Adrenal gland (tissue), 19 donors: ENCODE measurements at regions of chr14 and their contacts with region 1.

Region 1: DNA sequence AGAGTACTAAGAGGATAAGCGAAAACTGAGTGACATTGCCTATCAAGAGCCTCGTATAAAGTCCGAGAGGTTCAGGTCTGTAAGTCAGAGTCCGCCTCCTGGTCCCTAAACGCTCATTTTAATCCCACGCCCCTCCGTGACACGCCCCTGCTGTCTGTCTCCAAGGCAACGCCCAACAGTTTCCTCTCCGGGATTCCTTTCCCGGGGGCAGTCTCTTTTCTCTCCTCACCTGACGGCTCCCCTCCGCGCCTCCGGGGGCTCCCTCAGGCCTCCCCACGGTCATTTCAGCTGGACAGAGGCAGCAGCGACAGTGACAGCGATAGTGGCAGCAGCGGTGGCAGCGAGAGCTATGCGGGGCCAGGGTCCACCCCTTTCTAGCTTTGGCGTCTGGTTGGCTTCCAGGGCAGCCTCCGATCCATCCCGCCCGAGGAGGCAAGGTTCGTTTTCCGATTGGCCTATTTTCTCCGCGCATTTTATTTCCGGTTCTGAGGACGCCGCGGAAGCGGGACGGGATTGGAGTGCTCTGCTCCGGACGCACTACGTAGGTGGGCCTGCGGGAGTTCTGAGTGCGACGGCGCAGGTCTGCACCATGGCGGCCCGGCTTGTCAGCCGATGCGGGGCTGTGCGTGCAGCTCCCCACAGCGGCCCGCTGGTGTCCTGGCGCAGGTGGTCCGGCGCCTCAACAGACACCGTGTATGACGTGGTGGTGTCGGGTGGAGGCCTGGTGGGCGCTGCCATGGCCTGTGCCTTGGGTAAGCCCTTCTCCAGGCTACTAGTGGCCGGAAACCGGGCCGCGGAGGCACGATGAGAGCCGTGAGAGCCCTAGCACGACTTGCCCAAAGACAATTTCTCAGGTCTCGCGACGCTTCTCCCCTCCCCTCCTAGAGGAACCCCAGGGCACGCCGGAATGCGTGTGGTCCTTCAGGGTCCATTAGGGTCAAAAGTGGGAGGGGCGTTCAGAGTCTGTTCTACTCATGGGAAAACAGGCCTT is at the starts of genes COQ6 and FAM161B:
- DNase-seq: peak; percentile 94 to 99 (median 97)
- H3K4me3 ChIP-seq: peak within 1 kb of the TSS; percentile 66 to 94 (median 80)
- H3K27ac ChIP-seq: peak within 1 kb of the TSS; percentile 95 to 97 (median 95)
- H3K4me1 ChIP-seq: peaks cover 10 to 31% of the 10 kb centered on the region in 2 donors
- H3K27me3 ChIP-seq: no peaks in the 10 kb centered on the region
- CTCF ChIP-seq: no peak
- POLR2A ChIP-seq: peak; percentile 92 to 98
- total RNA-seq, gene COQ6: 51.1 to 144 (median 69.8) TPM
- total RNA-seq, gene FAM161B: 7.2 to 25.2 (median 12.6) TPM

Region 2: GRCh38 chr14:74038015-74038859 is 88.2 kb after region 1 on chr14:
- intact Hi-C with region 1: loop called in 1 of 2 experiments (anchors 10 kb)
- DNase-seq: no peak
- H3K4me3 ChIP-seq: no peak overlapping the region
- H3K27ac ChIP-seq: no peak overlapping the region
- H3K4me1 ChIP-seq: no peaks in the 10 kb centered on the region
- H3K27me3 ChIP-seq: no peaks in the 10 kb centered on the region
- CTCF ChIP-seq: peak; percentile 50 to 79 (median 59)
- POLR2A ChIP-seq: no peak

Region 3: DNA sequence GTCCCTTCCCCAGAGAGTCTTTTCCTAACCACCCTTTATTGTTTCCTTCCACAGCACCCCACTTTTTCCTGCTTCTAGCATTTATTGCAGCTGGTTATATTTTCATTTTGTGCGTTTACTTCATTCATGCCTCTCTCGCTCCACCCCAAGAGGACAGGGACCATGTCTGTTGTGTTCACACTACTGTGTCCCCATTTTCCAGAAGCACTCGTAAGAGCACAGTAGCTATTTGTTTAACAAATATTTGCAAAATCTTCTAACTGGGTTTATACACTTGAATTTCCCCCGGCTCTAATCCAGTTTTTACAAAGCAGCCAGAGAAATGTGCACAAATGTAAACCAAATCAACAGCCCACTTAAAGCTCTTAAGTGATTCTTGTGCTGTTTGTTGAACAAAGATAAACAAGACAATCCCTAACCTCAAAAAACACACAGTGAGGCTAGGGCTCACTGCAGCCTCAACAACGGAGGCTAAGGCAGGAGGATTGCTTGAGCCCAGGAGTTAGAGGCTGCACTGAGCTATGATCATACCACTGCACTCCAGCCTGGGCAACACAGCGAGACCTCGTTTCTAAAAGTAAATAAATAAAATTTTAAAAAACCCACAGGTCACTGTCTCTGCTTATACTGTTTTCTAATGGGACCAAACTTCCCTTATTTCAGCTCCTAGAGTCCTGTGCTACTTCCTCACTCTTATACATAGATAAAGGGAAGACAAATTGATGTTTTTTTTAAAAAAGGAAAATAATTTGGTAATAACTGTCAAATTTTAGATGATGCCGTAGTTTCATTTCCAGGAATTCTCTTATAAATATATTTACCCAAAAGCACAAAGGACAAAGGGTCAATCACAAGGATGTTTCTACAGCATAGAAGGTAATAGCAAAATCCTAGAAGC is 359.3 kb after region 1 on chr14:
- intact Hi-C with region 1: no loop called
- DNase-seq: no peak
- H3K4me3 ChIP-seq: no peak overlapping the region
- H3K27ac ChIP-seq: no peak overlapping the region
- H3K4me1 ChIP-seq: no peaks in the 10 kb centered on the region
- H3K27me3 ChIP-seq: no peaks in the 10 kb centered on the region
- CTCF ChIP-seq: no peak
- POLR2A ChIP-seq: no peak

Region 4: DNA sequence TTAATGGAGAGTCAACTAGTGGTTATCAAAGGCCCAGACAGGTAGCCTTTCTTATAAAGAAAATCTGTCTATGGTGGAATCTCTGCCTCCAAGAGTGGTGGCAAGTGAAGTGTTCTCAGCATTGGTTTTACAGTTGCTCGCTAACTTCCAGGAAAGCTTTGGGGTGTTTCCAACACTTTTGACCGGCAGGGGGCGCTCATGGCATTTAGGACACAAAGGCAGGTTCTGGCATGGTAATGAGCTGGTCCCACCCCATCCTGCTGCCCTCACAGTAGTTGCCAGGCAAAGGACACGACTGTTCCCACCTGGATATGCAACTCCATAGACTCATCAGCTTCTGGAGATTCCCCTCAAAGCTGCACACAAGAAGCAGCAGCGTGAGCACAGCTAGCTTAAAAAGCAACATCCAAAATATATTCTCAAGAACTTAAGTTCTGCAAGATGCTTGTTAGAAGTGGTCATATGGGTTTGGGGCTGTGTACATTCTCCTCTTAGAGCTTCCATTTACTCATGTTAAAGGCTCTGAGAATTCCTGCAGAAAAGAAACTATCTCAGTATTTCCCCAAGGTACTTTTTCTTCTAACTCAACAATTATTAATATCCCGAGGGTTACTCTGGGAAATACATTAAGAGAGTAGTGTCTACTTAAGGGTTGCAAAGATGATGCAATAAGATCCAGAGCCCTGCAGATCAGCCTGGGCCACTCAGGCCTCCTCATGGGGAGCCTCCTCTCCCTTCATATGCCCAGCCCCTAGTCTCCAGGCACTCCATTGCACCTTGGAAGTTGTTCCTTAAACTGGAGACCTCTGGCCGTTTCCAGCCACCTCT is 911.1 kb after region 1 on chr14:
- intact Hi-C with region 1: no loop called
- DNase-seq: peak; percentile 84 to 98 (median 92)
- H3K4me3 ChIP-seq: no peak overlapping the region
- H3K27ac ChIP-seq: no peak overlapping the region
- H3K4me1 ChIP-seq: no peaks in the 10 kb centered on the region
- H3K27me3 ChIP-seq: no peaks in the 10 kb centered on the region
- CTCF ChIP-seq: peak; percentile 78 to 88 (median 82)
- POLR2A ChIP-seq: no peak